ENCODE measurements at regions of chr10 and their contacts with region 1.

Region 1: DNA sequence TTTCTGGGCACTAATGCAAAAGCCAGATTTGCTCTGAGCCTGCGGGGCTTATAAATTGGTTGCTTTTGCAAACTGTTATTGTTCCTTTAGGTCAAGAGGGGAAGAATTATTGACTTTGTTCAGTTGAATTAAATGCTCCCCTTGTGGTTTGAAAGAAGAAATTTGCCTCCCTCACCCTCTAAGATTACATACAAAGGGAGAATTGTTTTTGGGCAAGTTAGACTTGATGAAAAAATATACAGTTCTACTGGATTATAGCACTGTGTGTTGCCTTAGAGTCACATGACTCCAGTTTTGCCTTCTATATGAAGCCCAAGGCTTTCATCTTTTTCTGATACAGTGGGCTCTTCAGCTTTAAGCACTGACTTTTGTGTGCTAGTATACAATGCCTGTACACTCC is 1265.8 kb upstream of the LRRTM3 start:
- DNase-seq: no peak
- H3K4me3 ChIP-seq: no peak overlapping the region
- CTCF ChIP-seq: no peak

Region 2: GRCh38 chr10:65735382-65735781 is 75.4 kb after region 1 on chr10:
- in situ Hi-C with region 1: loop called (anchors 10 kb)
- DNase-seq: no peak
- H3K4me3 ChIP-seq: no peak overlapping the region
- CTCF ChIP-seq: no peak